ENCODE measurements at regions of chr18 and their contacts with region 1.

Region 1: GRCh38 chr18:54284981-54285785 is 15.9 kb downstream of the POLI start:
- DNase-seq: peak; percentile 59
- H3K4me3 Mint-ChIP-seq: peak overlapping the region; percentile 32
- H3K27ac Mint-ChIP-seq: peak overlapping the region; percentile 73
- H3K4me1 Mint-ChIP-seq: peaks cover 39% of the 10 kb centered on the region
- H3K27me3 Mint-ChIP-seq: no peaks in the 10 kb centered on the region

Region 2: GRCh38 chr18:53937037-53937436 is 348.1 kb before region 1 on chr18:
- intact Hi-C with region 1: loop called (anchors 5 kb)
- DNase-seq: no peak
- H3K4me3 Mint-ChIP-seq: no peak overlapping the region
- H3K27ac Mint-ChIP-seq: peak overlapping the region; percentile 45
- H3K4me1 Mint-ChIP-seq: peaks cover 25% of the 10 kb centered on the region
- H3K27me3 Mint-ChIP-seq: no peaks in the 10 kb centered on the region

Region 3: GRCh38 chr18:54181856-54182602 is 103.2 kb before region 1 on chr18:
- intact Hi-C with region 1: loop called (anchors 1 kb)
- DNase-seq: no peak
- H3K4me3 Mint-ChIP-seq: no peak overlapping the region
- H3K27ac Mint-ChIP-seq: no peak overlapping the region
- H3K4me1 Mint-ChIP-seq: peaks cover 22% of the 10 kb centered on the region
- H3K27me3 Mint-ChIP-seq: no peaks in the 10 kb centered on the region

Region 4: GRCh38 chr18:54224379-54225014 is 60.7 kb before region 1 on chr18 and contains the start of gene MBD2:
- intact Hi-C with region 1: loop called (anchors 1 kb)
- DNase-seq: peak; percentile 94
- H3K4me3 Mint-ChIP-seq: peak within 1 kb of the TSS; percentile 98
- H3K27ac Mint-ChIP-seq: peak within 1 kb of the TSS; percentile 98
- H3K4me1 Mint-ChIP-seq: peaks cover 43% of the 10 kb centered on the region
- H3K27me3 Mint-ChIP-seq: no peaks in the 10 kb centered on the region
- total RNA-seq, gene MBD2: 223 and 242 TPM in 2 replicates

Region 5: DNA sequence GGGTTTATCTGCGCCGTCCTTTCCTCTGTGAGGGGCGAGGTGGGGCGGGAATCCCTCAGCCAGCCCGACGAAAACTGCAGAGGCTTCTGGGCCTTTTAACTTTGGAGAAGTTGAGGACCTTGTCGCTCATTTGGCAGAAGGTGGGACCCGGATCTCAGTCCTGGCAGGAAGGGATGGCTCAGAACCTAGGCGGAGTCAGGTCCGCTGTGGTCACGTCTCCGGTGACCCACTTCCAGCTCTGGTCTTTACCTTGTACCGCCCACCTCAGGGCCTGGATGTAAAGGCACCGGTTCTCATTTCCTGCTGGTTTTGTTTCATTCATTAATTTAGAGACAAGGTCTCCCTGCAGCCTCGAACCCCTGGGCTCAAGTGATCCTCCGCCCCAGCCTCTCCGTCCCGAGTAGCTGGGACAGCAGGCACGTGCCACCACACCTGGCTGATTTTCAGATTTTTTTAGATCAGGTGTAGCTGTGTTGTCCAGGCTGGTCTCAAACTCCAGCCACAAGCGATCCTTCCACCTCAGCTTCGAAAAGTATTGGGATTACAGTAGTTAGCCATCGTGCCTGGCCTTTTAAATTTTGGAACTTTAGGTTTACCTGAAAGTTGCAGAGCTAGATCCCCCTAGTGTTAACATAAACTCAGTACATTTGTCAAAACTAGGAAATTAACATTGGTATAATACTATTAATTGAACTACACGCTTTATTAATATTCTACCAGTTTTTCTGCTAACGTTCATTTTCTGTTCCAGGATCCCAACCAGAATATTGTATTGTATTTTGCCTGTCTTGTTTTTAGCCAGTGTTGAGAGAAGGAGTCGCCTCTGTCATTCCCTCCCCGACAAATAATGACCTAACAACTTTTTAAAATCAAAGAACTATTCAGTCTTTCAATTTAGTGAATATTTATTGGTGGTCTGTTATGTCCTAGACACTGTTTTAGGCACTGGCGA is 15.0 kb before region 1 on chr18:
- intact Hi-C with region 1: loop called (anchors 1 kb)
- DNase-seq: peak; percentile 54
- H3K4me3 Mint-ChIP-seq: peak overlapping the region; percentile 81
- H3K27ac Mint-ChIP-seq: peak overlapping the region; percentile 96
- H3K4me1 Mint-ChIP-seq: peaks cover 44% of the 10 kb centered on the region
- H3K27me3 Mint-ChIP-seq: no peaks in the 10 kb centered on the region

Region 6: GRCh38 chr18:54357660-54358494 is 72.7 kb after region 1 on chr18 and contains the starts of genes C18orf54 and STARD6:
- intact Hi-C with region 1: loop called (anchors 1 kb)
- DNase-seq: peak; percentile 93
- H3K4me3 Mint-ChIP-seq: peak within 1 kb of the TSS; percentile 98
- H3K27ac Mint-ChIP-seq: peak within 1 kb of the TSS; percentile 97
- H3K4me1 Mint-ChIP-seq: peaks cover 34% of the 10 kb centered on the region
- H3K27me3 Mint-ChIP-seq: no peaks in the 10 kb centered on the region
- total RNA-seq, gene C18orf54: 10.4 and 10.7 TPM in 2 replicates
- total RNA-seq, gene STARD6: 0.54 and 0.65 TPM in 2 replicates

Region 7: GRCh38 chr18:54712306-54712705 is 427.1 kb after region 1 on chr18:
- intact Hi-C with region 1: loop called (anchors 5 kb)
- DNase-seq: no peak
- H3K4me3 Mint-ChIP-seq: no peak overlapping the region
- H3K27ac Mint-ChIP-seq: no peak overlapping the region
- H3K4me1 Mint-ChIP-seq: peaks cover 50% of the 10 kb centered on the region
- H3K27me3 Mint-ChIP-seq: peaks cover 17% of the 10 kb centered on the region